ENCODE measurements at regions of chr14 and their contacts with region 1.

Region 1: GRCh38 chr14:29548948-29549370 is 378.7 kb downstream of the PRKD1 start:
- DNase-seq: no peak
- ATAC-seq: peak; percentile 76
- H3K4me3 ChIP-seq: no peak overlapping the region
- H3K27ac ChIP-seq: no peak overlapping the region
- H3K4me1 ChIP-seq: no peaks in the 10 kb centered on the region
- H3K27me3 ChIP-seq: no peaks in the 10 kb centered on the region

Region 2: DNA sequence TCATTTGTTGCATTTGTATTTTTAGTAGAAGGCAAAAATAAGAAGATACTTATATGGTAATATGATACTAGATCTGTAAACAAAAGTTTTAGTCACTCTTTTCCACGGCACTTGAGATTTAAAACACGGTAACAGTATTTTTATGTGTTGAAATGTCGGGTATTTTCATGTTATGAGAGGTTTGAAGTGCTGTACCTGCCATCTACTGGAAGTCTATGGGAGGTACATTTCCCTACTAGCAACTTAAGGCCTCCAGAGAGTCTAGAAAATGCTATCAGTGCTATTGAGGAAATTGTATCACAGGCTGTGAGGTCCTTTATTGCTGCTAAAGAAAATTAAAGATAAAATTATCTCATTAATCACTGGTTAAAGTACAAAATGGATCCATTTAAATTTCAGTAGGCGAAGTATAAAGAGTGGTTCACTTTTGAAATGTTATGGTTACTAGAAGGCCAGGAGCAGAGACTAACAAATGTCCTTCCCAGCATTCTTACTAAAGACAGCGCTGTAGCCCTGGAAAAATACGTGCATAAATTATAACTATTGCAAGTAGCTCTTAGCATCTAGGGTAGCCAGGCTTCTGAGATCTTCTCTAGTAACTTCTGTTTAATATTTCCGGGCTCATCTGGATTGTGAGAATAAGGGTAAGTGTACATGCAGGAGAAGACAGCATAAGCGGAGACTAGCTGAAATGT is 456.3 kb after region 1 on chr14:
- intact Hi-C with region 1: loop called (anchors 2 to 5 kb)
- DNase-seq: no peak
- ATAC-seq: peak; percentile 72
- H3K4me3 ChIP-seq: no peak overlapping the region
- H3K27ac ChIP-seq: no peak overlapping the region
- H3K4me1 ChIP-seq: no peaks in the 10 kb centered on the region
- H3K27me3 ChIP-seq: no peaks in the 10 kb centered on the region

Region 3: DNA sequence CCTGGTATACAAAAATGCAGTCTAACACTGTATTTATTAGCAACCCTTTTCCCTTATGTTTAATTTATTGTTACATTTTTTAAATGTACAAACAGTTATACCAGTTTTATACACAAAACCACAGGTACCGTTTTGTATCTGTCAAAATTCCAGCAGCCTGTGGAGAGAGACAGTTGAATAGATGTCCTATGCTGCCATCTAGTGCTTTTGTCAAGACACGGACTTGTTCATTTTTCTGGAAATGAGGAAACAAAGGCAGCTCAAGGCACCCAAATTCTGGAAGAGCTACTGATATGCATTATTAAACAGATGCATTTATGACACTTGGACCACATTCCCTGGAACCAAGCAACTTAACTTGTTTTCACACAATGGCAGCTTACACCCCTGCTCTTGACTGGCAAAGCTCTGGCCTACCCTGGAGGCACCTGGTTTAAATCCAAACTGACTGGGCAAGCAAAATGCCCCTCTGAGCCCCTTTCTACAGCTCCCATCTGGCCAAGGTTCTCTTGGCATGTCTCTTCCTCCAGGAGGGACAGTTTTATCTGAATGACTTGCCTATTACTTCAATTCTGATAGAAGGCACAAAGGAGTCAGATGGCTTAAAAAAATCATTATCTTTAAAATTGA is 665.6 kb after region 1 on chr14:
- intact Hi-C with region 1: loop called (anchors 2 to 5 kb)
- DNase-seq: no peak
- ATAC-seq: peak; percentile 72
- H3K4me3 ChIP-seq: no peak overlapping the region
- H3K27ac ChIP-seq: no peak overlapping the region
- H3K4me1 ChIP-seq: no peaks in the 10 kb centered on the region
- H3K27me3 ChIP-seq: no peaks in the 10 kb centered on the region